A549 (cell line): ENCODE measurements at regions of chr6 and their contacts with region 1.

Region 1: GRCh38 chr6:53718597-53719460 is 53.3 kb upstream of the KLHL31 start:
- DNase-seq: peak; percentile 46 to 64
- ATAC-seq: peak; percentile 86 to 88
- H3K4me3 ChIP-seq: no peak overlapping the region
- H3K27ac ChIP-seq: no peak overlapping the region
- H3K4me1 ChIP-seq: peaks cover 7% of the 10 kb centered on the region; the same call in 1 of the 3 replicates
- CTCF ChIP-seq: peak; percentile 71
- EP300 ChIP-seq: no peak
- POLR2A ChIP-seq: no peak
- RAD21 ChIP-seq: peak; percentile 32 to 51; a peak in 4 of 5 replicates

Region 2: DNA sequence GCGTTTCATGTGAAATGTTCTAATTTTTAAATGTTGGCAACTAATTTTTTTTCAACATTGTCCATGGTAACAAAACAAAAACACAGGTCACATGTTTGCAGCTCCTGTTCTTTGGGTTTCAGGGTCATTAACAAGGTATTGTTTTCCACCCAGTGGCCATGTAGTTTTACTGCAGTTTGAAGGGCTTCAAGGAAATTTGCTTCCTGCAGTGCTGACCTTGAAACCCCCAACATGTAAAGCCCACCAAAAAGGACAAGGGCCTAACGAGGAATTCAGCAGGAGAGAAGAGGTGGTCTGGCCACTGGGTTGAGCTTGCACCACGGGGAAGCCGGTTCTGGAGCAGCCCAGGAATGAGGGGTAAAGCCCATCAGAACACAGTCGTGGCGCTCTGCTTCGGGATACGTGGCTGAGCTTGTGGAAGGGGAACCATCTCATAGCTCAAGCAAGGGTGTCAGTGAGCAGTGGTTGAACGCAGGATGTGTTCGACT is 39.3 kb before region 1 on chr6:
- CTCF ChIA-PET with region 1: interaction called, 10 read pairs
- POLR2A ChIA-PET with region 1: no interaction called
- DNase-seq: peak; percentile 52 to 60
- ATAC-seq: peak; percentile 78
- H3K4me3 ChIP-seq: no peak overlapping the region
- H3K27ac ChIP-seq: no peak overlapping the region
- H3K4me1 ChIP-seq: no peaks in the 10 kb centered on the region
- CTCF ChIP-seq: peak; percentile 26
- EP300 ChIP-seq: no peak
- POLR2A ChIP-seq: no peak
- RAD21 ChIP-seq: peak; percentile 43 to 50